SK-N-SH (cell line): ENCODE measurements at regions of chr6 and their contacts with region 1.

Region 1: GRCh38 chr6:27893059-27893835 is 18.9 kb downstream of the OR2B2 start:
- DNase-seq: peak; percentile 81
- H3K4me3 ChIP-seq: peak overlapping the region; percentile 75 to 93
- H3K27ac ChIP-seq: peak overlapping the region; percentile 84 to 98
- H3K4me1 ChIP-seq: peaks cover 11 to 21% of the 10 kb centered on the region in 2 experiments; a peak in 3 of 4 replicates
- H3K27me3 ChIP-seq: no peaks in the 10 kb centered on the region
- CTCF ChIP-seq: no peak
- EP300 ChIP-seq: 0 out of 4 replicates have a peak, but pooled peaks of 1 of the 2 experiments have one; percentile 68
- RAD21 ChIP-seq: no peak

Region 2: GRCh38 chr6:26025894-26026832 is 1867.1 kb before region 1 on chr6:
- CTCF ChIA-PET with region 1: interaction called, 3 read pairs
- POLR2A ChIA-PET with region 1: interaction called, 15 read pairs
- DNase-seq: peak; percentile 59
- H3K4me3 ChIP-seq: peak overlapping the region; percentile 70 to 89
- H3K27ac ChIP-seq: peak overlapping the region; percentile 92 to 99
- H3K4me1 ChIP-seq: peaks cover 15 to 34% of the 10 kb centered on the region in 2 experiments; a peak in 3 of 4 replicates
- H3K27me3 ChIP-seq: no peaks in the 10 kb centered on the region
- CTCF ChIP-seq: peak; percentile 91
- EP300 ChIP-seq: peak in 1 of 2 experiments; percentile 22; a peak in 1 of 4 replicates
- RAD21 ChIP-seq: peak; percentile 24; the same call in 1 of the 2 replicates

Region 3: GRCh38 chr6:27772261-27773001 is 120.8 kb before region 1 on chr6:
- CTCF ChIA-PET with region 1: interaction called, 34 read pairs
- POLR2A ChIA-PET with region 1: interaction called, 3 read pairs
- DNase-seq: peak; percentile 83
- H3K4me3 ChIP-seq: no peak overlapping the region; a peak in 1 of 4 replicates
- H3K27ac ChIP-seq: no peak overlapping the region
- H3K4me1 ChIP-seq: peaks cover 0 to 3% of the 10 kb centered on the region in 2 experiments; a peak in 1 of 4 replicates
- H3K27me3 ChIP-seq: no peaks in the 10 kb centered on the region
- CTCF ChIP-seq: peak; percentile 88
- EP300 ChIP-seq: no peak
- RAD21 ChIP-seq: peak; percentile 67

Region 4: GRCh38 chr6:27825025-27825793 is 68.0 kb before region 1 on chr6:
- CTCF ChIA-PET with region 1: interaction called, 79 read pairs
- POLR2A ChIA-PET with region 1: interaction called, 107 read pairs
- DNase-seq: no peak
- H3K4me3 ChIP-seq: peak overlapping the region; percentile 86 to 98
- H3K27ac ChIP-seq: peak overlapping the region; percentile 89 to 93
- H3K4me1 ChIP-seq: no peaks in the 10 kb centered on the region; a peak in 3 of 4 replicates
- H3K27me3 ChIP-seq: no peaks in the 10 kb centered on the region
- CTCF ChIP-seq: no peak
- EP300 ChIP-seq: no peak
- RAD21 ChIP-seq: no peak

Region 5: DNA sequence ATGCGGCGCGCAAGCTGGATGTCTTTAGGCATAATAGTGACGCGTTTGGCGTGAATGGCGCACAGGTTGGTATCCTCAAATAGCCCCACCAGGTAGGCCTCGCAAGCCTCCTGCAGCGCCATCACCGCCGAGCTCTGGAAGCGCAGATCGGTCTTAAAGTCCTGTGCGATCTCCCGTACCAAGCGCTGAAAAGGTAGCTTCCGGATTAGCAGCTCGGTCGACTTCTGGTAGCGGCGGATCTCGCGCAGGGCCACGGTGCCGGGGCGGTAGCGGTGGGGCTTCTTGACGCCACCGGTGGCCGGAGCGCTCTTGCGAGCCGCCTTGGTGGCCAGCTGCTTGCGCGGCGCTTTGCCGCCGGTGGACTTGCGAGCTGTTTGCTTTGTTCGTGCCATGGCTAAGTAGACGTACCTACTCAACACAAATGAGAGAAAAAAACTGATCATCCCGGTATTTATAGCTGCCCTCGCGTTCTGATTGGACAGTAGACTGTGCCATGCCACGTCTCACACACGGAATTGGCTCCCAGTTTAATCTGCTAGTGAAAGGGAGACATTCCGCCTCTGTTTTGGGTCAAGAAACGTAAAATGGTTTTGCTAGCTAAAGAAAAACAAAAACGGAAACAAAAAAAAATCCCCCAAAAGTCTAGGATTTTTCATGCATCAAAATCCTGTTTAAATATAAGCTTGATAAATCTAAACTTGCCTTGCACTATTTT is 21.2 kb before region 1 on chr6:
- CTCF ChIA-PET with region 1: interaction called, 19 read pairs
- POLR2A ChIA-PET with region 1: interaction called, 155 read pairs
- DNase-seq: peak; percentile 91
- H3K4me3 ChIP-seq: peak overlapping the region; percentile 68 to 71
- H3K27ac ChIP-seq: peak overlapping the region; percentile 80 to 97
- H3K4me1 ChIP-seq: peaks cover 0 to 10% of the 10 kb centered on the region in 2 experiments; a peak in 3 of 4 replicates
- H3K27me3 ChIP-seq: no peaks in the 10 kb centered on the region
- CTCF ChIP-seq: peak; percentile 39
- EP300 ChIP-seq: no peak
- RAD21 ChIP-seq: no peak

Region 6: DNA sequence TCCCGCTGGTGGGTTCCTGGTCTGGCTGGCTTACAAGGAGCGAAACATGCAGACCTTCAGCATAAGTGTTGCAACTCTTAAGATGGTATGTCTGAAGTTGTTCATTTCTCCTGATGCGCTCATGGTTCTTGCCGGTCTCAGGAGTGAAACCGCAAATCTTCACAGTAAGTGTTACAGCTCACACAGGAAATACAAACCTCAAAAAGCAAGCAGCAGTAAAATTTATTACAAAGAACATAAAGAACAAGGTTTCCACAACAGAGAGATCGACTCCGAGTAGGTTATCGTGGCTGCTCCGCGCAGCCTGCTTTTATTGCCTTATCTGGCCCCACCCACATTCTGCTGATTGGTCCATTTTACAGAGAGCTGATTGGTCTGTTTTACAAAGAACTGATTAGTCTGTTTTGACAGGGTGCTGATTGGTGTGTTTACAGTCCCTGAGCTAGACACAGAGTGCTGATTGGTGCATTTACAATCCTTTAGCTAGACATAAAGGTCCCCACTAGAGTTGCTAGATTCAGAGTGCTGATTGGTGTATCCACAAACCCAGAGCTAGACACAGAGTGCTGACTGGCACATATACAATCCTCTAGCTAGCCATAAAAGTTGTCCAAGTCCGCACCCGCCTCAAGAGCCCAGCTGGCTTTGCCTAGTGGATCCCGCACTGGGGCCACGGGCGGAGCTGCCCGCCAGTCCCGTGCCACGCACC is 991.3 kb after region 1 on chr6:
- CTCF ChIA-PET with region 1: no interaction called
- POLR2A ChIA-PET with region 1: interaction called, 11 read pairs
- DNase-seq: peak; percentile 39
- H3K4me3 ChIP-seq: peak overlapping the region in 1 of 2 experiments; percentile 23; a peak in 1 of 4 replicates
- H3K27ac ChIP-seq: peak overlapping the region in 1 of 2 experiments; percentile 48; a peak in 2 of 4 replicates
- H3K4me1 ChIP-seq: no peaks in the 10 kb centered on the region
- H3K27me3 ChIP-seq: no peaks in the 10 kb centered on the region
- CTCF ChIP-seq: no peak
- EP300 ChIP-seq: no peak
- RAD21 ChIP-seq: no peak